Mammary epithelial cell (primary cell): ENCODE measurements at regions of chr22 and their contacts with region 1.

Region 1: DNA sequence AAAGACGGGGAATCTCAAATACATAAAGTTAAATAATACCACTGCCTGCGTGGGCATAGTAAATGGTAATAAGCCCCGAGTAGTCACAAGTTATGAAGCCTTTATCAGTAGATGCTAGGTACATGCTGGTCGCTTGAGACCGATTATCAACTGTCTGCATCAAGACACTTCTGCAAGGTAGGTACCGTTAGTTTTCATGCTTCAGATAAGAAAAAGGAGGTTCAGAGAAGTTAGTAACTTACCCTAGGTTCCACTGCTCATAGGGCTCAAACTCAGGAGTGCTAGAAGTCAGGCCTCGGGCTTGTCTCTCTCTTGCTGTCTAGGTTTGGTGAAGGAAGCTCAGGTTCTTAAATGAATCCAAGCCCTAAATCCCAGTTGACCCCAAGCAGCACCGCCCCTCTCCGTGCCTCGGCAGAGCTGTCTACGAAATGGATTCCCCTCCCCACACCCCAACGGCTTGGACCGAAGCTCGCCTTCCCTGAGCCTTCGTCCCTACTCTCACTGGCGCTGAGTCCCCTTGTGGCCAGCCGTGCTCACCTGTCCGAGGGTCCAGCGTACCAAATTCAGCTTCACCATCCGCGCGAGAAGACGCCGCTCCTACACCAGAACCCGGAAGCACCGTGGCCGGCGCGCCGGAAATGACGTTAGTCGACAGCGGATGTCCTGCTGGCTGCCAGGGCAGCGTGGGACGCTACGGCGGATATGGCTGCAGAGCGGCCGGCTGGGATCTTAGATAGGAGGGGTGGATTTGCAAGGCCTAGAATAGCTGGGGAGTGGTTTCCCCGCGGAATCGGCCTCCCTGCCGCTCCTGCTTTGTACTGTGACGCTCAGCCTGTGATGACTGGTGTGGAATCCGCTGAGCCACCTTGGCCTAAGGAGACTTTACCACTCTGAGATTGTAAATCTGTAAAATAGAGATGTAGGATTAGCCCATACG is at the start of gene TFIP11:
- DNase-seq: peak; percentile 87
- H3K4me3 ChIP-seq: peak within 1 kb of the TSS; percentile 73 to 100 (median 84)
- H3K27ac ChIP-seq: peak within 1 kb of the TSS; percentile 71
- H3K4me1 ChIP-seq: peaks cover 10% of the 10 kb centered on the region
- H3K27me3 ChIP-seq: no peaks in the 10 kb centered on the region
- CTCF ChIP-seq: peak in 1 of 2 donors; percentile 12
- total RNA-seq, gene TFIP11: 35.7 to 38.3 TPM

Region 2: GRCh38 chr22:26197425-26197824 is 314.7 kb before region 1 on chr22:
- CTCF ChIA-PET with region 1: no interaction called
- dilution Hi-C with region 1: no loop called
- in situ Hi-C with region 1: no loop called
- intact Hi-C with region 1: no loop called
- DNase-seq: no peak
- H3K4me3 ChIP-seq: no peak overlapping the region
- H3K27ac ChIP-seq: no peak overlapping the region
- H3K4me1 ChIP-seq: no peaks in the 10 kb centered on the region
- H3K27me3 ChIP-seq: no peaks in the 10 kb centered on the region
- CTCF ChIP-seq: no peak

Region 3: DNA sequence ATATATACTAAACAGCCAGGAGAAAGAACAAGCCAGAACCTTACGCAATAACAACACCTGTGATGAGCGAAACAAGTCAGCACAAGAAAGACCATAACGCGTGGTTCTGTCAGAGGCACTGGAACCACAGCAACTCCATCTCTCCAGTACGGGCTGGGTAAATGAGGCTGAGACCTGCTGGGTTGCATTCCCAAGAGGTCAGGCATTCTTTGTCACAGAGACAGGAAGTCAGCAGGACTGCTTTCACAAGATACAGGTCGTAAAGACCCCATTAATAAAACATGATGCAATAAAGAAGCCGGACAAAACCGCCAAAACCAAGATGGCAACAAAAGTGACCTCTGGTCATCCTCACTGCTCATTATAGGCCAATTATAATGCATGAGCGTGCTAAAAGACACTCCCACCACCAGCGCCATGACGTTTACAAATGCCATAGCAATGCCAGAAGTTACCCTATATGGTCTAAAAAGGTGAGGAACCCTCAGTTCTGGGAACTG is 56.1 kb after region 1 on chr22:
- CTCF ChIA-PET with region 1: no interaction called
- dilution Hi-C with region 1: no loop called
- in situ Hi-C with region 1: no loop called
- intact Hi-C with region 1: loop called (anchors 5 kb)
- DNase-seq: peak; percentile 97
- H3K4me3 ChIP-seq: no peak overlapping the region
- H3K27ac ChIP-seq: peak overlapping the region; percentile 71
- H3K4me1 ChIP-seq: peaks cover 45% of the 10 kb centered on the region
- H3K27me3 ChIP-seq: no peaks in the 10 kb centered on the region
- CTCF ChIP-seq: no peak